Activated T-helper 1 cell treated with anti-CD3 and anti-CD28 coated beads, Interleukin-12 subunit alpha, Interleukin-12 subunit beta, Interleukin-2, Interleukin-4 antibody, amounts not matched to agents 30 ng/mL and 10 ng/mL and 1 ng/mL, durations not matched to agents 14 hours and 24 hours and 36 hours (primary cell): ENCODE measurements at regions of chr2 and their contacts with region 1.

Region 1: DNA sequence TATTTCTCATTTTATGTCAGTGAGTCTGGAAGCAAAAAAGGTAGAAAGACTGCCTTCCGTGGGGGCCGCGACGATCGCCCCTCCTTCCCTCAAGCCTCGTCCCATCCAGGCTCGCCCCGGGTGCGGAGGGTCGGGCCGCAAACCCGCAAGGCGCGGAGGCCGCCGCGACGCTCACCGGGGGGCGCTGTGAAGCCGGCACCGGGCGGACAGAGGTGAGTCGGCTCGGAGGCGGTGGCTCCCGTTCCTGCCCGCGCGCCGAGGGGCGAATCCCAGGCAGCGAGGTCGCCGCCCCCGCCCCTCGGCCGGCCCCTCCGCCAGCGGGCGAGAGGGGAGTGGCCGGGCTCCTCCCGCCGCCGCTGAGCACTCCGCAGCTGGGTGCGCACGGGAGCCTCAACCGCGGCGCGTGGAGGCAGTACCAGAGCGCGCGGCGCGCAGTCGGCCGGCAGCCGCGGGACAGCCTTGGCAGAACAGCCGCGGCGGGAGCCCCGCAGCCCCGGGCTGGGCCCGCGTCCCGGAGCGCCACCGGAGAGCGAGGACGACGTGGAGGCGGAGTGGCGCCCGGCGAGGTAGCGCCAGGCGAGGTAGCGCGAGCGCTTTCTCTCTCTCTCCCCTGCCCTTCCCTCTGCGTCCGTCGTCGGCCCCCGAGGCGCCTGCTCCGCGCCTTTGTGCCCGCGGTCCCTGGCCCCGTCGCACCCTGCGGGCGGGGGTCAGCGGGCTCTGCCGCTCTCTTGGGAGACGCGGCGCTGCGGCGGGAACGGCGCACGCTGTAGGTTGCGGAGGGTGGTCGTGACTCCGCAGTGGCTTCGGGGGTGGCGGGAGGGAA is at the start of gene MYO1B:
- DNase-seq: peak; percentile 58
- H3K4me3 Mint-ChIP-seq: peak within 1 kb of the TSS; percentile 77
- H3K27ac Mint-ChIP-seq: peak within 1 kb of the TSS; percentile 49
- H3K4me1 Mint-ChIP-seq: peaks cover 23% of the 10 kb centered on the region
- H3K27me3 Mint-ChIP-seq: peaks cover 5% of the 10 kb centered on the region
- total RNA-seq, gene MYO1B: 13.2 and 15.2 TPM in 2 replicates

Region 2: GRCh38 chr2:191195021-191195420 is 50.2 kb before region 1 on chr2:
- intact Hi-C with region 1: loop called (anchors 2 kb)
- DNase-seq: no peak
- H3K4me3 Mint-ChIP-seq: peak overlapping the region; percentile 28
- H3K27ac Mint-ChIP-seq: peak overlapping the region; percentile 93
- H3K4me1 Mint-ChIP-seq: peaks cover 49% of the 10 kb centered on the region
- H3K27me3 Mint-ChIP-seq: no peaks in the 10 kb centered on the region

Region 3: GRCh38 chr2:191376981-191377629 is 131.8 kb after region 1 on chr2:
- intact Hi-C with region 1: loop called (anchors 2 kb)
- DNase-seq: no peak
- H3K4me3 Mint-ChIP-seq: no peak overlapping the region
- H3K27ac Mint-ChIP-seq: no peak overlapping the region
- H3K4me1 Mint-ChIP-seq: peaks cover 22% of the 10 kb centered on the region
- H3K27me3 Mint-ChIP-seq: no peaks in the 10 kb centered on the region

Region 4: GRCh38 chr2:191411472-191411871 is 166.2 kb after region 1 on chr2:
- intact Hi-C with region 1: no loop called
- DNase-seq: no peak
- H3K4me3 Mint-ChIP-seq: no peak overlapping the region
- H3K27ac Mint-ChIP-seq: no peak overlapping the region
- H3K4me1 Mint-ChIP-seq: no peaks in the 10 kb centered on the region
- H3K27me3 Mint-ChIP-seq: no peaks in the 10 kb centered on the region

Region 5: GRCh38 chr2:191521608-191522208 is 276.5 kb after region 1 on chr2:
- intact Hi-C with region 1: loop called (anchors 10 kb)
- DNase-seq: no peak
- H3K4me3 Mint-ChIP-seq: no peak overlapping the region
- H3K27ac Mint-ChIP-seq: no peak overlapping the region
- H3K4me1 Mint-ChIP-seq: no peaks in the 10 kb centered on the region
- H3K27me3 Mint-ChIP-seq: peaks cover 5% of the 10 kb centered on the region